ENCODE measurements at regions of chr10 and their contacts with region 1.

Region 1: GRCh38 chr10:79468024-79468560 is 22.7 kb upstream of the ZCCHC24 start:
- DNase-seq: no peak
- ATAC-seq: no peak; the same call in 1 of the 2 replicates
- H3K4me3 Mint-ChIP-seq: no peak overlapping the region
- H3K27ac Mint-ChIP-seq: no peak overlapping the region
- H3K4me1 Mint-ChIP-seq: no peaks in the 10 kb centered on the region
- H3K27me3 Mint-ChIP-seq: peaks cover 5% of the 10 kb centered on the region; the same call in 1 of the 2 replicates
- CTCF ChIP-seq: no peak

Region 2: DNA sequence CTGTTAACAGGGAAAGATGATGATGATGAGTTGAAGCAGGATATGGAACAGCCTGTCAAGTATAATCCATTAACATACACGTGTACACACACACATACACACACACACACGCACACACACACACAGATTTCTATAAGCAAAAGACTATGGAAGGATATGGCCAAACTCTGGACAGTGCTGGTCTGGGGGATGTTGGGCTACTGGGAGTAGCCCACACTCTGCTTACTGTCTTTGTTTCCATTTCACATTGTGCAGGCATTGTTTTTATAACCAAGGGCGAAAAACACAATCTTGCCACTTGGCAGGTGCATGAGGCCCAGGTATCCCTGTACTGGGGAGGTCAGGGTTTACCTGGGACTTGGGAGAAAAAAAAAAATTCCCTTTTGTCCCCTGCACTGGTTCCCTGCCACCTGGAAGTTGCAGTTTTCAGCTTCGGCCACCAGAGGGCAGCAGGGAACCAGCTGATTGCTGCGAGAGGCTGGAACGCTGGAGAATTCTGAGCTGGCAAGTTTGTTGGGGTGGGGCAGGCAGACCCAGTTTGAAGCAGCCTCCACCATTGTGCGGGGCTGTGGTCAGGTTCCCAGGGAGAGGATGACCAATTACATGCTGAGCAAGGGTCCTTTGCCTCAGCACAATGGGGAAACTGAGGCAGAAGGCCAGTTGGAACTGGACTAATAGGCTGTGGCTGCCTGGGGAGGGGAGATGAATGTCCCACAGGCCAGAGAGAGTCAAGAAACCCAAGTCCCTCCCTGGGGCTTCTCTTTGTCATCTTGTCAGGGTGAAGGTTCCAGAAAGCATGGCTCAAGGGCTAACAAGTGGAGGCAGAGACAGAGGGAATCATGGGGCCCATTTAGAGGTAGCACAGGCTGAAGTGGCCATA is 93.5 kb before region 1 on chr10:
- CTCF ChIA-PET with region 1: interaction called, 14 read pairs
- POLR2A ChIA-PET with region 1: no interaction called
- DNase-seq: peak; percentile 90
- ATAC-seq: peak; percentile 86
- H3K4me3 Mint-ChIP-seq: no peak overlapping the region
- H3K27ac Mint-ChIP-seq: no peak overlapping the region
- H3K4me1 Mint-ChIP-seq: peaks cover 2% of the 10 kb centered on the region
- H3K27me3 Mint-ChIP-seq: peaks cover 3% of the 10 kb centered on the region
- CTCF ChIP-seq: peak; percentile 98

Region 3: GRCh38 chr10:79445141-79445976 is 22.7 kb before region 1 on chr10 and contains the start of gene ZCCHC24:
- CTCF ChIA-PET with region 1: interaction called, 29 read pairs
- POLR2A ChIA-PET with region 1: no interaction called
- DNase-seq: peak; percentile 98
- ATAC-seq: peak; percentile 95
- H3K4me3 Mint-ChIP-seq: peak within 1 kb of the TSS; percentile 86
- H3K27ac Mint-ChIP-seq: peak within 1 kb of the TSS; percentile 98
- H3K4me1 Mint-ChIP-seq: peaks cover 31% of the 10 kb centered on the region
- H3K27me3 Mint-ChIP-seq: peaks cover 44% of the 10 kb centered on the region
- CTCF ChIP-seq: no peak
- total RNA-seq, gene ZCCHC24: 6.0 to 7.7 TPM (median 6.2 TPM) in 3 replicates

Region 4: DNA sequence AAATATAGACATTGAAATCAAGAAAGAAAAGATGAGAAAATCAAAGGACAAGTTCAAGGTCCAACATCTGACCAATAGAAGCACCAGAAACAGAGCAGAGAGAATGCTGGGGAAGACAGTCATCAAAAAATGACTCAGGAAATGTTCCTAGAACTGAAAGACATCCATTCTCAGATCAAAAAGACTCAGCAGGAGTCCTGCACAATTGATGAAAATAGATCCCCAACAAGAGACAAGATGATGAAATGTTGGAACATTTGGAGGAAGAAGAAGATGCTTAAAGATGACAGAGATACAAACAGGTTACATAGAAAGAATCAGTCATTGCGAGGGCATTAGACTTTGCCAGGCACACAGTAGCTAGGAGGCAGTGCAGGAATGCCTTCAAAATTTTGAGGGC is 14.2 kb after region 1 on chr10:
- CTCF ChIA-PET with region 1: interaction called, 67 read pairs
- POLR2A ChIA-PET with region 1: no interaction called
- DNase-seq: no peak
- ATAC-seq: no peak
- H3K4me3 Mint-ChIP-seq: no peak overlapping the region
- H3K27ac Mint-ChIP-seq: no peak overlapping the region
- H3K4me1 Mint-ChIP-seq: no peaks in the 10 kb centered on the region
- H3K27me3 Mint-ChIP-seq: peaks cover 7% of the 10 kb centered on the region
- CTCF ChIP-seq: no peak

Region 5: DNA sequence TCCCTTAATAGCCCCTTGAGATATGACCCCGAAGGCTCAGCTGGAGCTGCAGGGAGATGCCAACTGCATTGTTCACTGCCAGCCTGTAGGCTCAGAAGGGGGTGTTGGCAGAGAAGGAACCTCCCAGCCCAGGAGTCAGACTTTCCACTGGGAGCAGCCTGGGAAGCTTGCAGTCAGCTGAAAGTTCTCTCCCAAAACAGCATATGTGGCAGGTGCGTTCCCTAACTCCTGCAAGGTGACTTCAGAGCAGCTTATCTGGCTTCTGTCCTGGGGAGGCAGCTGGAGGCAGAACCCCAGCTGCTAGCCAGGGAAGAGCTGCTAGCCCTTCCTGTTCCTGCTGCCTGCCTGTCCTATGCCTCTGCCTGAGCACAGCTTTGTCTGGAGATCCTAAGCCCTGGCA is 84.1 kb after region 1 on chr10:
- CTCF ChIA-PET with region 1: no interaction called
- POLR2A ChIA-PET with region 1: no interaction called
- DNase-seq: no peak
- ATAC-seq: no peak
- H3K4me3 Mint-ChIP-seq: no peak overlapping the region
- H3K27ac Mint-ChIP-seq: no peak overlapping the region
- H3K4me1 Mint-ChIP-seq: no peaks in the 10 kb centered on the region
- H3K27me3 Mint-ChIP-seq: peaks cover 4% of the 10 kb centered on the region
- CTCF ChIP-seq: no peak

Region 6: DNA sequence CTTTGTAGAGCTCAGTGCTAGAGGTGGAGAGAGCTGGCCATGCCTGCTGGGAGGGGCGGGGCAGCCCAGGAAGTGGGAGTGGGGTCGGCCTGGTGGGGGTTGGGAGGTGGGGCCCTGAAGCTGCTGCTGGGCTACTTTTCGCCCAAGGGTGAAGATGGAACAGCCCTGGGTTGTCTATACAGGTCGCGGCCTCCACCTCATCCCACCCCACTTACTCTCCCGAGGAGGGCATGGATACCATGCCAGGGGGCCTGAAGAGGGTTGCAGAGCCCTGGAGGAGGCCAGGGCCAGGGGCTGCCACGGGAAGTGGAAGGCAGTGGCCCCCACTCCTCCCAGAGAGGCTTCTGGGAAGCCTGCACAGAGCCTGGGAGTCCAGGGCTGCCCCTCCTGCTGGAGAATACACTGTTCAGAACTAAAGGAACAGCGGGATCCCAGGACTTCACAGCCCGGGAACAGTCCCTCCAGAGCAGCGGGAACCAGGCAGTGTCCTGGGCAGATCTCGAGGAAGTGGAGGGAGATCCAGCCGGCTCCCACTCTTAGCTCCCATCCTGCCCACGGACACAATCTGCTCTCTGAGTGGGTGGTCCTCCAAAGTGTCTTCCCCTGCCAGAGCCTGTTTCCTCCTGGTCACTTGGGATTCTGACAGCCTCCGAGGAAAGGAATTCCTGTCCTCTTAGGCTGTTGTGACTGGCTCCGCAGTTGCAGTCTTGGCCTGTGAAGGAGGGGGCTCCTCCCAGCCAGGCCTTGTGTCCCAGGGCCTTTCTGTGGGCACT is 797.8 kb after region 1 on chr10:
- CTCF ChIA-PET with region 1: no interaction called
- POLR2A ChIA-PET with region 1: interaction called, 10 read pairs
- DNase-seq: peak; percentile 28
- ATAC-seq: peak; percentile 75
- H3K4me3 Mint-ChIP-seq: no peak overlapping the region
- H3K27ac Mint-ChIP-seq: no peak overlapping the region
- H3K4me1 Mint-ChIP-seq: peaks cover 17% of the 10 kb centered on the region
- H3K27me3 Mint-ChIP-seq: peaks cover 8% of the 10 kb centered on the region
- CTCF ChIP-seq: no peak